OCI-LY7 (cell line): ENCODE measurements at regions of chr5 and their contacts with region 1.

Region 1: DNA sequence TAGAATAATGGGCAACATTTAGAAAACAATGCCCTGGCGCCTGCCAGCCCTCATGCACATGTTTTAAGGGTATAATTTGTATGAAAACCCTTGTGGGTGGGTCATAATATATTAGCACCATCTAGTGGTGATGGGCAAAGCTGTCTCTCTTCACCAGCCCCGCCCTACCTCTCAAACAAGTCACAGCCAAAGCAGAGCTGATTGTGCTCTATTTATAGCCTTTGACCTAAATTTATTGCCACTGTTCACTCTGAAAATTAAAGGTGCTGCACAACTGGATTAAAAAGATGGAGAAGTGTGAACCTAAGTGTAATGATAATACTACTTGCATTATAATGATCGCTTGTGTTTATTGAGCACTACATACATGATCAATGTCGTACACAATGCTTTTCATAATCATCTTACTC is 131.9 kb upstream of the ANKH start:
- DNase-seq: peak; percentile 69
- H3K4me3 ChIP-seq: no peak overlapping the region
- H3K27ac ChIP-seq: no peak overlapping the region
- H3K4me1 ChIP-seq: no peaks in the 10 kb centered on the region
- CTCF ChIP-seq: peak; percentile 93

Region 2: GRCh38 chr5:14463629-14464028 is 539.9 kb before region 1 on chr5:
- CTCF ChIA-PET with region 1: no interaction called
- POLR2A ChIA-PET with region 1: no interaction called
- intact Hi-C with region 1: no loop called
- DNase-seq: no peak
- H3K4me3 ChIP-seq: no peak overlapping the region
- H3K27ac ChIP-seq: no peak overlapping the region
- H3K4me1 ChIP-seq: no peaks in the 10 kb centered on the region
- CTCF ChIP-seq: no peak

Region 3: GRCh38 chr5:14685757-14686156 is 317.8 kb before region 1 on chr5:
- CTCF ChIA-PET with region 1: interaction called, 3 read pairs
- POLR2A ChIA-PET with region 1: no interaction called
- intact Hi-C with region 1: loop called (anchors 1 kb)
- DNase-seq: peak; percentile 70
- H3K4me3 ChIP-seq: no peak overlapping the region
- H3K27ac ChIP-seq: no peak overlapping the region
- H3K4me1 ChIP-seq: peaks cover 8% of the 10 kb centered on the region
- CTCF ChIP-seq: peak; percentile 83

Region 4: GRCh38 chr5:14727428-14727865 is 276.1 kb before region 1 on chr5:
- CTCF ChIA-PET with region 1: no interaction called
- POLR2A ChIA-PET with region 1: no interaction called
- intact Hi-C with region 1: loop called (anchors 1 kb)
- DNase-seq: peak; percentile 79
- H3K4me3 ChIP-seq: no peak overlapping the region
- H3K27ac ChIP-seq: no peak overlapping the region
- H3K4me1 ChIP-seq: no peaks in the 10 kb centered on the region
- CTCF ChIP-seq: peak; percentile 99

Region 5: DNA sequence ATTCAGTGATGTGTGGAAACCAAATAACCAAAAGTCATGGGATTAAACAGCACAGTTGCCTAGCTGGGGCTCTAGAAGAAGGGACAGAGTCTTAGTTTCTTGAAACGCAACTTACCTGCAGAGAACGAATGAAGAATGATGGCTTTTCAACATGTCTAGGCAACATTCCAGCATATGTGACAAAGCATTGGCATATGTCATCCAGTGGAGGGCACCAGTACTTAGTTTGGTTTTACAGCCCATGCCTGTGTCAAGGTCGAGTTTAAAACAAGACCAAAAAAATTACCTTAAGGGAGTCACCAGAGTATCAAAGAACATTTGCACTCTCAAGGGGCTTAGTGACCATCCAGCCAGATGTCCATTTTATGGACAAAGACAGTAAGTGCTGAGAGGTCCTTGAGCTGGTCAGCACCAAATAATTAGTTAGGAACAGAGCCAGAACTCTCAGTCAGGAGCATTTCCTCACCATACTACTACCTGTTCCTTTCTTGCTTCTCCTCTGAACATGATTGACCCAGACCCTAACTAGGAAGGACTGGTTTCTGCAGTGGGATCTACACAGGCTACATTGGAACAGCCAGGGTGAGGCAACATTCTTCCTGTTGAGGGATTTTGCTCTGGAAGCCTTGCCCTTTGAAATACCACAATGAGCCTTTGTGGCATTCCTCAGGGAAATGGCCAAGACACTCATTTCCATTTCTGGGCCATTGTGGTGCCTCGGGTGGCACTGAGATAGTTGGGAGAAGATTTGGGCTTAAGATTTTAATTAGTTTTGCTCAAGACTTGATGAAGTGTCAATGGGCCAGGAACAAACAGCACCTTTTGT is 56.5 kb before region 1 on chr5:
- CTCF ChIA-PET with region 1: no interaction called
- POLR2A ChIA-PET with region 1: no interaction called
- intact Hi-C with region 1: loop called (anchors 5 kb)
- DNase-seq: peak; percentile 30
- H3K4me3 ChIP-seq: no peak overlapping the region
- H3K27ac ChIP-seq: no peak overlapping the region
- H3K4me1 ChIP-seq: no peaks in the 10 kb centered on the region
- CTCF ChIP-seq: peak; percentile 70